Activated naive CD4-positive, alpha-beta T cell treated with anti-CD3 and anti-CD28 coated beads for 36 hours (primary cell): ENCODE measurements at regions of chr13 and their contacts with region 1.

Region 1: GRCh38 chr13:95403828-95404522 is 102.7 kb upstream of the ABCC4 start:
- DNase-seq: peak; percentile 86
- H3K4me3 Mint-ChIP-seq: peak overlapping the region; percentile 84
- H3K27ac Mint-ChIP-seq: no peak overlapping the region
- H3K4me1 Mint-ChIP-seq: peaks cover 6% of the 10 kb centered on the region
- H3K27me3 Mint-ChIP-seq: peaks cover 2% of the 10 kb centered on the region

Region 2: DNA sequence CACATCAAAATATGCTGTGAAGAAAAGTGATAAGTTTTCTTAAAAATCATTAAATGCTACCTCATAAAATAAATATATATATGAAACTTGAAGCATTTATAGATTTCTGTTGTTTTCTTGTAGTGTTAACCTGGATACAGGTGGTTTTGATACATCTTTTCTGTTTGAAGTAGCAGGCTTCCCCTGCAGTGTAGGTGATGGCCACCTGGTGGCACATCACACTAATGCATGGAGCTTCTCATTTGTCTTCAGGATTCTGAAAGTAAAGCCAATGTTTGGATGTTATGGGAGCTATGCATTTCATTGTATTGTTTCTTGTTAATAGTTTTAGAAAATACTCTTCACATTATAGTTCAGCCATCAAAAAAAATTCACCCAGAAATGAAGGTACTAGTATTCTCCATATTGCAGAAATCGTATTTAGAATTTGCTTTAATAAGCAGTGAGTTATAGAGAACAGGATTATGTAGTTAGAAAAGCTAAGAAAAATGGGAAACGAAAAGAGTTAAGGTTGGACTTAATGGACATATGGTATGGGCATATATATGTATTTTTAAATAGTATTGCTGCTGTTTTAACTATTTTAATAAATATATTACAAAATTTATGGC is 783.6 kb before region 1 on chr13:
- CTCF ChIA-PET with region 1: interaction called, 7 read pairs
- intact Hi-C with region 1: loop called (anchors 2 kb)
- DNase-seq: peak; percentile 41
- H3K4me3 Mint-ChIP-seq: no peak overlapping the region
- H3K27ac Mint-ChIP-seq: no peak overlapping the region
- H3K4me1 Mint-ChIP-seq: peaks cover 7% of the 10 kb centered on the region
- H3K27me3 Mint-ChIP-seq: no peaks in the 10 kb centered on the region

Region 3: DNA sequence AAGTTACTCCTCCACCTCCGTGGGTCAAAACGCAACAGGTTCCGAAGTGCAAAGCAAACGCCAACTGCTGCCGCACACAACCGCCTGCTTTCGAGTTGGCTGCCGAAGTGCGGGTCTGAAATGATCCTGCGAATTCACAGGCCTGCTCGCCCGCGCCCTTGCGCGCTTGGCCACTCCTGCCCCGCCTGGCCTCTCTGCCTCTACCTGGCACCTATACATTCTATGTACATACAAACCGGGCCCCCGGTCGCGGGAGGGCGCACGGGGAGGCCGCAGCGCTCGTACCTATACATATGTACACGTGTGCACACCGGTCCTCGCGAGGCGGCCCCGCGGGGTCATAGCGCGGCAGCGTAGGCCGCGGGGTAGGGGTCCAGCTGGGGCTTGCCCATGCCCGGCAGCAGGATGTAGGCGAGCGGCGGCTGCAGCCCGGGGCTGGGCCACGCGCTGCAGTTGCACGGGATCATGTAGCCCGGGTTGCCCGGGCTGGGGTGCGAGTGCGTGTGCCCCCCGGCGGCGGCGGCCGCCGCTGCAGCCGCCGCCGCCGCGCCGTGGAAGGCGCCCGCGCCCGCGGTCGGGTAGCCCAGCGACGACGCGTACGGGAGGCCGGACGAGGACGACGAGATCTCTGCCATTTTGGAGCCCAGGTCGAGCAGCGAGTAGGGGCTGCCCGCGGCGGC is 693.0 kb before region 1 on chr13:
- CTCF ChIA-PET with region 1: no interaction called
- intact Hi-C with region 1: loop called (anchors 2 kb)
- DNase-seq: peak; percentile 22
- H3K4me3 Mint-ChIP-seq: peak overlapping the region; percentile 48
- H3K27ac Mint-ChIP-seq: no peak overlapping the region
- H3K4me1 Mint-ChIP-seq: peaks cover 24% of the 10 kb centered on the region
- H3K27me3 Mint-ChIP-seq: peaks cover 72% of the 10 kb centered on the region

Region 4: GRCh38 chr13:95191821-95192563 is 212.0 kb before region 1 on chr13:
- CTCF ChIA-PET with region 1: interaction called, 192 read pairs
- intact Hi-C with region 1: loop called (anchors 1 kb)
- DNase-seq: peak; percentile 82
- H3K4me3 Mint-ChIP-seq: no peak overlapping the region
- H3K27ac Mint-ChIP-seq: no peak overlapping the region
- H3K4me1 Mint-ChIP-seq: peaks cover 5% of the 10 kb centered on the region
- H3K27me3 Mint-ChIP-seq: no peaks in the 10 kb centered on the region

Region 5: GRCh38 chr13:95378603-95379002 is 25.4 kb before region 1 on chr13:
- CTCF ChIA-PET with region 1: interaction called, 17 read pairs
- intact Hi-C with region 1: loop called (anchors 1 kb)
- DNase-seq: no peak
- H3K4me3 Mint-ChIP-seq: no peak overlapping the region
- H3K27ac Mint-ChIP-seq: no peak overlapping the region
- H3K4me1 Mint-ChIP-seq: peaks cover 5% of the 10 kb centered on the region
- H3K27me3 Mint-ChIP-seq: no peaks in the 10 kb centered on the region

Region 6: GRCh38 chr13:95480131-95480545 is 76.2 kb after region 1 on chr13:
- CTCF ChIA-PET with region 1: interaction called, 13 read pairs
- intact Hi-C with region 1: loop called (anchors 1 kb)
- DNase-seq: peak; percentile 27
- H3K4me3 Mint-ChIP-seq: no peak overlapping the region
- H3K27ac Mint-ChIP-seq: no peak overlapping the region
- H3K4me1 Mint-ChIP-seq: peaks cover 10% of the 10 kb centered on the region
- H3K27me3 Mint-ChIP-seq: peaks cover 3% of the 10 kb centered on the region

Region 7: GRCh38 chr13:95624020-95624419 is 220.0 kb after region 1 on chr13:
- CTCF ChIA-PET with region 1: no interaction called
- intact Hi-C with region 1: no loop called
- DNase-seq: peak; percentile 39
- H3K4me3 Mint-ChIP-seq: no peak overlapping the region
- H3K27ac Mint-ChIP-seq: no peak overlapping the region
- H3K4me1 Mint-ChIP-seq: no peaks in the 10 kb centered on the region
- H3K27me3 Mint-ChIP-seq: peaks cover 14% of the 10 kb centered on the region

Region 8: GRCh38 chr13:95896302-95896701 is 492.3 kb after region 1 on chr13:
- CTCF ChIA-PET with region 1: no interaction called
- intact Hi-C with region 1: no loop called
- DNase-seq: no peak
- H3K4me3 Mint-ChIP-seq: no peak overlapping the region
- H3K27ac Mint-ChIP-seq: no peak overlapping the region
- H3K4me1 Mint-ChIP-seq: no peaks in the 10 kb centered on the region
- H3K27me3 Mint-ChIP-seq: no peaks in the 10 kb centered on the region